ENCODE measurements at regions of chr2 and their contacts with region 1.

Region 1: DNA sequence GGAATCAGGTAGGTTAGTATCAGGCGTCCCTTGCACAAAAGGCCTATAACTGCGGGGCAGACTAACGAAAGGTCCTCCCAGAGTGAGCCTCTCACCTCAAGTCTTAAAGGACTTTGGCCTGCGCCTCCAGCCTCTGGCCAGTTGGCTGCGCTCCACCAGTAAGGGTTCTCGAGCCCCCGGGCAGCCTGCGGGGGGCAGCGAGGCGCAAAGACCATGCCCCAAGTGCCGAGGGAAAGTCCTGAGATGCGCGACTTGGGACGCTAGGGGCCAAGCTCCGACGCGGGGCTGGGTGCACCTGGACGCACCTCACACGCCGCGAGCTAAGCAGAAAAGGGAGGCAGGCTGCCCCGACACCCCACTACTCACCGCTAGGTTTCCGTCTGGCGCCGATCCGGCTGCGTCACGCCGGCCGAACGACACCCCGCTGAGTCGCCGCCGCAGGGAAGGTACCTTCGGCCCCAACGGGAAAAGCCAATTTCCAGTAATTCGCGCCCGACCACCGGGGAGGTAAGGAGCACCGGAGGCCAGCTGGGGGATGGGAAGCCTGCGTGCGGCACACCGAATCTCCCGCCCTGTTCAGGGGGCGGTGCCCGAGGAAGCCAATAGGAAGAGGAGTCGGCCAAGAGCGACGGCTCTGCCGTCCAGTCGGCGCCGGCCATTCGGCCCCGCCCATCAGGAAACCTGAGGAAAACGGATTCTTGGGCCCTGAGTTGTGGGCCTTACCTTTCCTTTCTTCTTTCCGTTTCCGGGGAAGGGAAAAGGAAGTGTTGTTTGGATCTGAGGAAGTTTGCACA is at the start of gene ORC2:
- DNase-seq: peak; percentile 78
- ATAC-seq: peak; percentile 98
- H3K4me3 ChIP-seq: peak within 1 kb of the TSS; percentile 81 to 98
- H3K27ac ChIP-seq: peak within 1 kb of the TSS; percentile 94
- H3K4me1 ChIP-seq: peaks cover 10% of the 10 kb centered on the region
- H3K27me3 ChIP-seq: no peaks in the 10 kb centered on the region
- CTCF ChIP-seq: peak; percentile 83
- total RNA-seq, gene ORC2: 41.8 TPM

Region 2: GRCh38 chr2:201024518-201024917 is 61.2 kb after region 1 on chr2:
- CTCF ChIA-PET with region 1: no interaction called
- POLR2A ChIA-PET with region 1: no interaction called
- in situ Hi-C with region 1: no loop called
- intact Hi-C with region 1: no loop called
- DNase-seq: no peak
- ATAC-seq: no peak
- H3K4me3 ChIP-seq: no peak overlapping the region
- H3K27ac ChIP-seq: no peak overlapping the region
- H3K4me1 ChIP-seq: no peaks in the 10 kb centered on the region
- H3K27me3 ChIP-seq: no peaks in the 10 kb centered on the region
- CTCF ChIP-seq: no peak

Region 3: GRCh38 chr2:201064797-201065329 is 101.5 kb after region 1 on chr2:
- CTCF ChIA-PET with region 1: interaction called, 8 read pairs
- POLR2A ChIA-PET with region 1: no interaction called
- in situ Hi-C with region 1: no loop called
- intact Hi-C with region 1: loop called (anchors 5 kb)
- DNase-seq: no peak
- ATAC-seq: no peak
- H3K4me3 ChIP-seq: no peak overlapping the region
- H3K27ac ChIP-seq: no peak overlapping the region
- H3K4me1 ChIP-seq: peaks cover 14% of the 10 kb centered on the region
- H3K27me3 ChIP-seq: no peaks in the 10 kb centered on the region
- CTCF ChIP-seq: no peak

Region 4: GRCh38 chr2:201118121-201118960 is 155.0 kb after region 1 on chr2:
- CTCF ChIA-PET with region 1: no interaction called
- POLR2A ChIA-PET with region 1: interaction called, 11 read pairs
- in situ Hi-C with region 1: no loop called
- intact Hi-C with region 1: no loop called
- DNase-seq: peak; percentile 73
- ATAC-seq: peak; percentile 63
- H3K4me3 ChIP-seq: peak overlapping the region; percentile 67 to 84
- H3K27ac ChIP-seq: peak overlapping the region; percentile 100
- H3K4me1 ChIP-seq: peaks cover 48% of the 10 kb centered on the region
- H3K27me3 ChIP-seq: no peaks in the 10 kb centered on the region
- CTCF ChIP-seq: peak; percentile 76

Region 5: GRCh38 chr2:201432038-201432620 is 468.8 kb after region 1 on chr2:
- CTCF ChIA-PET with region 1: no interaction called
- POLR2A ChIA-PET with region 1: no interaction called
- in situ Hi-C with region 1: no loop called
- intact Hi-C with region 1: no loop called
- DNase-seq: no peak
- ATAC-seq: no peak
- H3K4me3 ChIP-seq: no peak overlapping the region
- H3K27ac ChIP-seq: no peak overlapping the region
- H3K4me1 ChIP-seq: no peaks in the 10 kb centered on the region
- H3K27me3 ChIP-seq: no peaks in the 10 kb centered on the region
- CTCF ChIP-seq: no peak

Measured in Panc1 (cell line).